H1 (cell line): ENCODE measurements at regions of chr10 and their contacts with region 1.

Region 1: GRCh38 chr10:96374985-96375830 is 16.4 kb upstream of the OPALIN start:
- DNase-seq: peak; percentile 80 to 93
- H3K4me3 ChIP-seq: peak overlapping the region; percentile 30 to 56 (median 47); a peak in 7 of 8 replicates
- H3K27ac ChIP-seq: no peak overlapping the region
- H3K4me1 ChIP-seq: peaks cover 0 to 13% (median 7%) of the 10 kb centered on the region in 4 experiments; a peak in 6 of 7 replicates
- H3K27me3 ChIP-seq: peaks cover 0 to 3% (median 1%) of the 10 kb centered on the region in 4 experiments; a peak in 3 of 7 replicates
- CTCF ChIP-seq: peak; percentile 95 to 100 (median 100)
- EP300 ChIP-seq: no peak
- POLR2A ChIP-seq: no peak
- RAD21 ChIP-seq: peak; percentile 95 to 96

Region 2: DNA sequence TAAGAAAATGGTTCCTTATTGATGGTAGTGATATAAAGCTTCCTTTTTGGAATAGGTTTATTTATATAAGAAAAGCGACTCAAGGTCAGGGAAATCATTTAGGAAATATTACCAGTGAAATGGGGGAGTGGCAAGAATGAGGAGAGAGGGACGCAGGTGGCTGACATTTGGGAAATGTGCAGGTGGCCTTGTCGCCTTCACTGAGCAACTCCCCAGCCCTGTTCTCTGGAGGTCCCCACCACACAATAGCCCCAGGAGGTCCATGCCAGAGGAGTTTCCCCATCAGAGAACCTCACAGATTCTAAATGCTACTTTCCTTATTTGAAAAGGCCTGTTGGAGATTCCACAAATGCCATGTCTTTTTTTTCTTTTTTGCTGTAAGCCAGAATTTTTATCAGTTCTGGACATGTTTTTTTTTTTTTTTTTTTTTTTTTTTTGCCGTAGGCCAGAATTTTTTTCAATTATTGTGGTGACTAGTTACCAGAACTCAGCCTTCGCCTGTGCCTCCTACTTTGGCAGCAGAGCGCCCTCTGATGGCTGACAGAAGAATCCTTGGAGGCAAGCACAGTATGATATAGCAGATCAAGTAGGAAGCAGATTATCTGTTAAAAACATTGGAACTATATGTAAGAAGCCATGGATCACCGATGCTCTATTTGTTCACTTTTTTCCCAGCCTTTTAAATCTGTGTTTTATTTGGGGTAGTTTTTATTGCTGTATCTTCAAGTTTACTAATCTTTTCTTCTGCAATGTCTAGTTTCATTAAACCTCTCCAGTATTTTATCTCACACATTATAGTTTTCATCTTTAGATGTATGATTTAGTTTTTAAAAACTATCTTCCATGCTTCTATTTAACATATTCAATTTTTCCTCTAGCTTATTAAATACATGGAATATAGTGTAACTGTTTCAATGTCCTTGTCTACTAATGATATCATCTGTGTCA is 35.0 kb before region 1 on chr10:
- CTCF ChIA-PET with region 1: interaction called, 197 read pairs
- POLR2A ChIA-PET with region 1: no interaction called
- DNase-seq: peak in 1 of 2 experiments; percentile 74
- H3K4me3 ChIP-seq: no peak overlapping the region
- H3K27ac ChIP-seq: no peak overlapping the region
- H3K4me1 ChIP-seq: peaks cover 0 to 14% (median 10%) of the 10 kb centered on the region in 4 experiments; a peak in 6 of 7 replicates
- H3K27me3 ChIP-seq: peaks cover 0 to 1% (median 0%) of the 10 kb centered on the region in 4 experiments; a peak in 1 of 7 replicates
- CTCF ChIP-seq: peak; percentile 71 to 80 (median 80)
- EP300 ChIP-seq: no peak
- POLR2A ChIP-seq: no peak
- RAD21 ChIP-seq: peak; percentile 70 to 75

Region 3: DNA sequence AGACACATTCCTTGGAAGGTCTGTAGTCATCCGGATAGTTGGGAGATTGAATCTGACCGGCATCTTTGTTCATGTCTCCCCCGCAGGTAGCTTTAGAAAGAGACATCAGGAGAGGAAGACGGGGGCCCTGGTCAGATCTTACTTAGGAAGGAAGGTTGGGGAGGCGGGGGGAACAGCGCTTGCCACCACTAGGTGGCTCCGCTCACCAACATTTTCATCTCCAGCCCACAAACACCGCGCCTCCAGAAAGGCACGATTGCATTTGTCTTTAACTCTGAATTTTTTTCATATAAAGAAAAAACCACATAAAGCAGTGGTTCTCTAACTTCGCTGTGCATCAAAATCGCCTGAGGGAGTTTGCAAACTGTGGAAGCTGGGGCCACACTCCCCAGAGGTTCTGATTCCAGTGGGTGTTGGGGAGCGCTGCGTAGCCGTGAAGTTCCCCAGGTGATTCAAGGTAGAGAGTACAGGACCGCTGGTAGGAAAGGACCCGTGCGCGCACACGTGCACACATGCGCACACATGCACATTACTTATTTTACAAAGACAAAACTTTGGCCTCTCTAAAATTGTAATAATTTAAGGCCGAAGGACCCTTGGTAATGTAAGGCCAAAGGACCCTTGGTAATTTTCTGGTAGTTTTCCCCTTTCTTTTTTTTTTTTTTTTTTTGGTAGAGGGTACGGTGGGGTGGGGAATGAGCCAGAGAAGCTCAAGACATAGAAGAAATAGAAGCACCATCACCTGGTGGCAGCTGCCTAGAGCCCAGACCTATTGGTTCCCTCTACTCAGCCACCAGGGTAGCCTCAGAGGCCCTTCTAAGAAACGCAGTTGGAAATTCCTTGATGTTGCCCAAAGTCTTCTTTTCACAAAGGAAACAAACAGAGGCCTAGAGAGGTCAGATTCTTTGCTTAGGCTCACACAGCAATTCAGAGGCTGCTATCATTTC is 21.0 kb after region 1 on chr10:
- CTCF ChIA-PET with region 1: interaction called, 151 read pairs
- POLR2A ChIA-PET with region 1: no interaction called
- DNase-seq: peak; percentile 56 to 79
- H3K4me3 ChIP-seq: peak overlapping the region; percentile 10 to 49 (median 22); a peak in 4 of 8 replicates
- H3K27ac ChIP-seq: no peak overlapping the region
- H3K4me1 ChIP-seq: peaks cover 0 to 6% (median 2%) of the 10 kb centered on the region in 4 experiments; a peak in 6 of 7 replicates
- H3K27me3 ChIP-seq: no peaks in the 10 kb centered on the region; a peak in 2 of 7 replicates
- CTCF ChIP-seq: peak; percentile 88 to 91 (median 89)
- EP300 ChIP-seq: no peak
- POLR2A ChIP-seq: no peak
- RAD21 ChIP-seq: peak; percentile 91 to 92

Region 4: GRCh38 chr10:96440361-96441292 is 65.4 kb after region 1 on chr10:
- CTCF ChIA-PET with region 1: interaction called, 20 read pairs
- POLR2A ChIA-PET with region 1: no interaction called
- DNase-seq: no peak
- H3K4me3 ChIP-seq: no peak overlapping the region
- H3K27ac ChIP-seq: no peak overlapping the region
- H3K4me1 ChIP-seq: peaks cover 10 to 16% (median 13%) of the 10 kb centered on the region in 4 experiments
- H3K27me3 ChIP-seq: no peaks in the 10 kb centered on the region
- CTCF ChIP-seq: no peak
- EP300 ChIP-seq: no peak
- POLR2A ChIP-seq: no peak
- RAD21 ChIP-seq: no peak

Region 5: DNA sequence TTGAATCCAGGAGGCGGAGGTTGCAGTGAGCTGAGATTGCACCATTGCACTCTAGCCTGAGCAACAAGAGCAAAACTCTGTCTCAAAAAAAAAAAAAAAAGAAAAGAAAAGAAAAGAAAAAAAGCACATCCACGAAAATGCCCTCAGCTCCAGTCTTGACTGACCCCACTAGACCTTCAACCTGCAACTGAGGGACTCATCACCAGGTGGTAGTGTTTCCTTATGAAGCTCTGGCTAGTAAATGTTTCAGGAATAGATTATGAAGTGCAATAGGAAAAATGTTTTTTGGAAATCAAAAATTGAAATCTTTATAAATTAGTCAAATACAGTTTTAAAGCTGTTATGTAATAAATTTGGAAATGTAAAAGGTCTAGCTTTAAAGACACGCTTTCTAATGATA is 116.1 kb after region 1 on chr10:
- CTCF ChIA-PET with region 1: interaction called, 23 read pairs
- POLR2A ChIA-PET with region 1: no interaction called
- DNase-seq: no peak
- H3K4me3 ChIP-seq: no peak overlapping the region
- H3K27ac ChIP-seq: no peak overlapping the region
- H3K4me1 ChIP-seq: no peaks in the 10 kb centered on the region
- H3K27me3 ChIP-seq: no peaks in the 10 kb centered on the region
- CTCF ChIP-seq: peak; percentile 31 to 58 (median 56)
- EP300 ChIP-seq: no peak
- POLR2A ChIP-seq: no peak
- RAD21 ChIP-seq: peak; percentile 76 to 79

Region 6: GRCh38 chr10:96560966-96561887 is 186.0 kb after region 1 on chr10:
- CTCF ChIA-PET with region 1: interaction called, 13 read pairs
- POLR2A ChIA-PET with region 1: no interaction called
- DNase-seq: no peak
- H3K4me3 ChIP-seq: no peak overlapping the region
- H3K27ac ChIP-seq: no peak overlapping the region
- H3K4me1 ChIP-seq: no peaks in the 10 kb centered on the region
- H3K27me3 ChIP-seq: no peaks in the 10 kb centered on the region
- CTCF ChIP-seq: no peak
- EP300 ChIP-seq: no peak
- POLR2A ChIP-seq: no peak
- RAD21 ChIP-seq: no peak